Endothelial cell of umbilical vein (primary cell): ENCODE measurements at regions of chr14 and their contacts with region 1.

Region 1: DNA sequence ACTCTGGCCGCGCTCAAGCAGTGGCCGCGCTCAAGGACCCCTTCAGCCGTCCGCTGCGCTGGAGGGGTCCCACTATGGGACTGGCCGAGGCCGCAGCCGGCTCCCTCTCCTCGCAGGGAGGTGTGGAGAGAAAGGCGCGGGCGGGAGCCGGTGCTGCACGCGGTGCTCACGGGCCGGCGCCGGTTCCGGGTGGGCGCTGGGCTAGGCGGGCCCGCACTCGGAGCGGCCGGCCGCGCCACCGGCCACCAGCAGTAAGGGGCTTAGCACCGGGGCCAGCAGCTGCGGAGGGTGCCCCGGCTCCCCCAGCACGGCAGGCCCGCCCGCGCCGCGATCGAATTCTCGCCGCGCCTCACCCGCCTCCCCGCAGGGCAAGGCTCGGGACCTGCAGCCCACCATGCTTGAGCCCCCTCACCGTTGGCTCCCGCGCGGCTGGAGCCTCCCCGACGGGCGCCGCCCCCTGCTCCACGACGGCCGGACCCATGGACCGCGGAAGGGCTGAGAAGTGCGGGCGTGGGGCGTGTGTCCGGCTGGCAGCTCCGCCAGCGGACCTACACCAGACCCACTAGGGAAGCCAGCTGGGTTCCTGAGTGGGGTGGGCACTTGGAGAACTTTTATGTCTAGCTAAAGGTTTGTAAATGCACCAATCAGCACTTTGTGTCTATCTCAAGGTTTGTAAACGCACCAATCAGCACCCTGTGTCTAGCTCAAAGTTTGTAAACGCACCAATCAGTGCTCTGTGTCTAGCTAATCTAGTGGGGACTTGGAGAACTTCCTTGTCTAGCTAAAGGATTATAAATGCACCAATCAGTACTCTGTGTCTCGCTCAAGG is 49.5 kb downstream of the KLHL28 start:
- DNase-seq: no peak
- H3K4me3 ChIP-seq: peak overlapping the region in 1 of 3 experiments; percentile 30
- H3K27ac ChIP-seq: no peak overlapping the region
- H3K4me1 ChIP-seq: no peaks in the 10 kb centered on the region
- H3K27me3 ChIP-seq: peaks cover 15 to 16% of the 10 kb centered on the region in 2 experiments
- CTCF ChIP-seq: no peak
- POLR2A ChIP-seq: no peak

Region 2: DNA sequence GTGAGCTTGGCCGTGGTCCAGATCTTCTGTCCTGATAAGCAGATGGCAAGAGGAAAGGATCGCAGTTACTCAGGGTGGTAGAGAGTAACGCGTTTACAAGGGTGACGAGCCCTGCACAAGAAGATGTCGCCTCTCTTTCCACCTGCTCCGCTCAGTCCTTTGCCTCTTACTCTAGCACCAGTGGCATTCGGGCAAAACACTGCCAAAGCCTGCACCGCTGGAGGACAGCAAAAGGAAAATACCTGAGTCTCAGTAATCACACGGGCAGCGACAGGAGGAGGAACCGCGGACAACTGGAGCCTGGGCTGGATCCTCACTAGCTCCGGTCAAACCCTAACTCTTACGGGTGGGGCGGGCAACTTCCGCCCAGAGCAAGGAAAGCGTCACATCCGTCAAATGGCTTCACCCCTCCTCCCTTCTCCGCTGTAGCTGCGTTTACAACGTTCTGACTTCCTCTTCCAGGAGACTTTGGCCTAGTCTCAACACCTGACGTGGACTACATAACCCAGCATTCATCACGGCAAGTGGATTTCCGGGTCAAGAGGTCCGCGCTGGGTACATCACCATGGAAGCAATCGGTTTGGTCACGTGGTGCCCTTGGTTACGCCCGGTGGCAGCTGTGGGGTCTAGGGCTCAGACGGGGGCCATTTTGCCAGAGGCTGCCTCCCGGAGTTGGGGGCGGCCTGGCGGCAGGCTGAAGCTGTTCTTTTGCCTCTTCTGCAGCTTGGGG is 49.5 kb after region 1 on chr14 and contains the starts of genes KLHL28 and TOGARAM1:
- CTCF ChIA-PET with region 1: interaction called, 22 read pairs
- POLR2A ChIA-PET with region 1: no interaction called
- dilution Hi-C with region 1: no loop called
- intact Hi-C with region 1: loop called (anchors 5 kb)
- DNase-seq: peak; percentile 100
- H3K4me3 ChIP-seq: peak within 1 kb of the TSS; percentile 71 to 83 (median 72)
- H3K27ac ChIP-seq: peak within 1 kb of the TSS; percentile 60
- H3K4me1 ChIP-seq: peaks cover 35% of the 10 kb centered on the region
- H3K27me3 ChIP-seq: no peaks in the 10 kb centered on the region
- CTCF ChIP-seq: no peak
- POLR2A ChIP-seq: peak; percentile 95
- total RNA-seq, gene KLHL28: 7.3 and 8.4 TPM in 2 replicates
- total RNA-seq, gene TOGARAM1: 13.3 and 13.8 TPM in 2 replicates

Region 3: GRCh38 chr14:45083971-45084722 is 171.9 kb after region 1 on chr14 and contains the start of gene PRPF39:
- CTCF ChIA-PET with region 1: interaction called, 12 read pairs
- POLR2A ChIA-PET with region 1: no interaction called
- dilution Hi-C with region 1: no loop called
- intact Hi-C with region 1: loop called (anchors 1 kb)
- DNase-seq: peak; percentile 95
- H3K4me3 ChIP-seq: peak within 1 kb of the TSS; percentile 50 to 86 (median 81)
- H3K27ac ChIP-seq: peak within 1 kb of the TSS; percentile 63
- H3K4me1 ChIP-seq: peaks cover 8% of the 10 kb centered on the region
- H3K27me3 ChIP-seq: no peaks in the 10 kb centered on the region
- CTCF ChIP-seq: no peak
- POLR2A ChIP-seq: peak; percentile 97
- total RNA-seq, gene PRPF39: 36.3 and 44.4 TPM in 2 replicates

Region 4: GRCh38 chr14:45201905-45202304 is 289.6 kb after region 1 on chr14:
- CTCF ChIA-PET with region 1: interaction called, 12 read pairs
- POLR2A ChIA-PET with region 1: no interaction called
- dilution Hi-C with region 1: no loop called
- intact Hi-C with region 1: no loop called
- DNase-seq: peak; percentile 15
- H3K4me3 ChIP-seq: no peak overlapping the region
- H3K27ac ChIP-seq: no peak overlapping the region
- H3K4me1 ChIP-seq: no peaks in the 10 kb centered on the region
- H3K27me3 ChIP-seq: no peaks in the 10 kb centered on the region
- CTCF ChIP-seq: peak; percentile 3 to 19
- POLR2A ChIP-seq: no peak

Region 5: DNA sequence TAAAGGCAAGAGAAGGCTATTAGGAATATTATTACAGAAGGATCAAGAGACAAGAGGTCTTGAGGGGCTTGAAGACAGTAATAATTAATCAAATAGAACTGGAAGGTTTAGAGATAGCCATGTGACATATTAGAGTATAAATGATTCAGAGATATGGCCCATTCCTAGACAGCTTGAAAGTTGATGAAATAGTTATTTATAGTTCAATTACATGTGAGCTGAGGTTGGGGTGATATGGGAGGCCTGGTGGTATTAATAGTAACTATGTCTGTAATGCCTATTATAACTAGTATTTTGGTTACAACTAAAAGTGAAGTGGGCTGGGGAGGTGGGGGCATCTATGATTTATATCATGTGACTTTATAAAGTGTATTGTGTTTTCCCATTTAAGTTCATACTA is 354.8 kb after region 1 on chr14:
- CTCF ChIA-PET with region 1: interaction called, 239 read pairs
- POLR2A ChIA-PET with region 1: no interaction called
- dilution Hi-C with region 1: no loop called
- intact Hi-C with region 1: loop called (anchors 1 kb)
- DNase-seq: no peak
- H3K4me3 ChIP-seq: no peak overlapping the region
- H3K27ac ChIP-seq: no peak overlapping the region
- H3K4me1 ChIP-seq: no peaks in the 10 kb centered on the region
- H3K27me3 ChIP-seq: peaks cover 3 to 6% of the 10 kb centered on the region in 2 experiments
- CTCF ChIP-seq: no peak
- POLR2A ChIP-seq: no peak